ENCODE measurements at regions of chr14 and their contacts with region 1.

Region 1: GRCh38 chr14:54566410-54567223 is at the start of gene SAMD4A:
- DNase-seq: peak; percentile 89
- ATAC-seq: peak; percentile 55
- total RNA-seq, gene SAMD4A: 149 TPM

Region 2: DNA sequence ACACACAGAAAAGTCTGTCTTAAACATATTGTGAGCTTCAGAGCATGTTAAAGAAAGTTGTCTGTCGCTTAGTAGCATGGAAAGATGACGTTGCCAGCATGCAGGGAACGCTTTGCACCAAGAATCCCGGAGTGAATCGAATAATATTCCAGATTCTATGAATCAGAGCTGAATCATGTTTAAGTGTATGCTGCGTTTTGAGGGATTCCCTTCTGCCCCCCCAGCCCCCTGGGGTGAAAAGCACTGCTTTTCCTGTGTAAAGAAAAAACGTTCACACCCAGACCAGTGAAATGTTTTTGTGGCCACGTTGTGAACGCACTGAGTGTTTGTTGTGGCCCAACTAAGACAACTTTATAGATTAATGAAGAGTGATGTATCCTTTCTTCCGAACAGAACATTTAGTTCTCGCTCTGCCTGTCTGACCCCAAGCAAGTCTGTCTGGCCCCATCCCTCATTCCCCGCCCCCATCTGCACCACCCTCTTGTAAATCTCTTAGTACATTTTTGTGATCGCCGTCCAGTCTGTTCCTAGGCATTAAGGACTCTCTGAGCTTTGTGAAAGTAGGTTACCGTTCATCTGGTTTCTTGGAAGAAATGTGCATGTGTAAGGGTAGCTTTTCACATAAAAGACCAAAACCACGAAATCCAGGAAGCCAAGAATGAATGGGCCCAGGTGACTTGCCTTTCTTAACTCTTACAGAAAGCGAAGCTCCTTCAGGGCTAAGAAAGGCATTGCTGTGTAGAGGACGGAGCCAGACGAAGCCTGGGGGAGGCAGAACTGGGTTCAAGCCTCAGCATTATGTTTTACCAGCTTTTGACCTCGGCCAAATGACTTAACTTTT is 103.3 kb after region 1 on chr14:
- intact Hi-C with region 1: loop called (anchors 5 kb)
- DNase-seq: no peak
- ATAC-seq: no peak

Region 3: DNA sequence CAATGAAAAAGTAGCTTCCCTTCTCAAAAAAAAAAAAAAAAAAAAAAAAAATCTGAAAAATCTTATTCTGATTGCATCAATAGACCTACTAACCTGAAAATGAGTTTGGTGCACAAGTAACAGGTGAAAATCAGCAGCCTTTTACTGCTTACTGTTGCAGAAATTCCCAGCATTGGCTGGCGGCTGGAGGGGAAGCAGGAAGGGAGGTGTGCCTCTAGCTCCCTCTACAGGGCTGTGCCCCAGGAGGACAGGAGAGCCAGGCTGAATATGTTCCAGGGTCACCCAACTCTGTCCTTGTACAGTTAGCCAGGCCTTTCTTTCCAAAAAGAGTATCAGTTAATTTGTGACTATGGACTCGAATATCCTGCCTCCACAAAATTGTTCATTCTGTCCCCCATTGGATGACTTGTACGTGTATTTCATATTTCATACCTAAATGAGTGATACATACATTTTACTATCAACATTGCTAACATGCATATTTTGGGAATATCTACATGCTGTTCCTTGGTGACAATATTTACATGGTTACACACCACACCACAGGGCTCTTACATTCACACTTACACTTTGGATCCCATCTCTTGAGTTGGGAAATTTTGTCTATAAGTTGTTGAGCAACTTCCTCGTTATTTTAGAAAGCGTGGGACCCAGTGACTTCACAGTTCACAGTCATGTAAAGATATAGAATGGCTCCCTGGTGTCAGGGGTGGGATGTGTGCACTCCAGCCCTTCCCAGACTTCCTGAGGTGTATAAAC is 125.1 kb after region 1 on chr14:
- intact Hi-C with region 1: loop called (anchors 5 kb)
- DNase-seq: peak; percentile 83
- ATAC-seq: peak; percentile 84

Region 4: DNA sequence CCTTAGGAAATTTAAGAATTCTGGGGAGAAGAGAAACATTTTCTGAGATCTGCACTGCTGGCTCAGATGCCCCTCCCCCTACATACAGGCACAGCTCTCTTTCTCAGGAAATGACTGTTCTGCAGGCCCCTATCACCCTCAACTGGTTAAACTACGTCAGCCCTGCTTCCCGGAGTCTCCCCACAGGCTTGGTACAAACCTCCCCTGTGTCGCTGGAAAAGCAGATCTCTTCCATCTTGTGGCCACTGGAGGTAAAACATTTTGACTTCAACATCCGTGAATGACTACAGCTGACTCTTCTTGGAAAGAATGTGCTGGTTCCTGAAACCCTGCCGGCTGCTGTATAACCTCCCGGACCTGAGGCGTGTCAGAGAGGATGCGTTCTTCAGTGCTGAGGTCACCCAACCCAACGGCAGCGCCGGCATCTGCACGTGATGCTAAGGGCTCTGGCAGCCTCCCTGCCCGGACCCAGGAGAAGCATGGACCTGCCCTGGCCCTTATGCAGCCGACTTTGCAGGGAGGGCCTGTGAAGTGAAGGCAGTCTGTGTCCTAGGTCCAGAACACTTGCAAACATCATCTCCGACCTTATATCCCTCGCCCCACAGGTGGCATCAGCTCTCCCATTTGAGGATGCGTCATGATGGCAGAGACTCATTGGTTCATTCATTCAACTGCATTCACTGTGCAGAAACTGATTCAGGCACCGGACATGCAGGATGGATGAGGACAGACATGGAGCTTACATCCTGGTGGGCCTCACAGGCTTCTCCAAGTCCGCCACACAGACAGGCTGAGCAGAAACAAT is 206.8 kb after region 1 on chr14:
- intact Hi-C with region 1: loop called (anchors 1 kb)
- DNase-seq: peak; percentile 83
- ATAC-seq: peak; percentile 75

Region 5: DNA sequence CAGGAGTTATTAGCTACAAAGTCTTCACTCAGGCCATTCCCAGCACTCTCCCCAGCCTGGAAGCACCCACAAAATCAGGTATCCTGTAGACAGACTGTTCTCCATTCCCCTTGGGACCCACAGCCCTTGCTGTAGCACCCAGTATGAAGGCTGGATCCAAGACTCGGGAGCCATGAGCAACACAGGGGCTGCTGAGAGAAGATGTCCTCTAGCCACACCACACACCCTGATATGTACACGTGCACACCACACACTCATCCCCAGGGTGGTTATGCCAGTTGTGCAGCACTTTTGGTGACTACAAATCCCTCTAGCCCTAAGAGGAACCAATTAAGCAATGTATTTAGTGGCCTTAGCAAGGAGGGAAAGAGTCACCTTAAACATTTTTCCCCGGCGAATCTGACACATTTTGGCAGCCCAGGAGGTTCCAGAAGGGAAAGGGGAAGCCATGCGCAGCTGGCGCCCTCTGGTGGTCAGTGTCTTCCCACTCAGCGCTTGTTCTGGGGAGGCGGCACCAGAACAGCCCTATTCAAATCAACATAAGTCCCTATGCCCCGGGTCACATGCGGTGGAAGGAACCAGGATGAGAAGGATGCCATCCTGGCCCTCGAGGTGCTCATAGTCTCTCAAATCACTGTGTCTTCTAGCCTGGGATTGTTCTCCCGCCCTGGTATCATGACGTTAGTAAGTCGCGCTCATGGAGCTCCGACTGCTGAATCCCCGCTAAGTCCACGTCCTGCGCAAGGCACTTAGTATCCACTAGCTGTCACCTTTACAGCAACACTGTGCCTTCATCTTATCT is 239.1 kb after region 1 on chr14:
- intact Hi-C with region 1: loop called (anchors 2 kb)
- DNase-seq: peak; percentile 90
- ATAC-seq: peak; percentile 97

Region 6: DNA sequence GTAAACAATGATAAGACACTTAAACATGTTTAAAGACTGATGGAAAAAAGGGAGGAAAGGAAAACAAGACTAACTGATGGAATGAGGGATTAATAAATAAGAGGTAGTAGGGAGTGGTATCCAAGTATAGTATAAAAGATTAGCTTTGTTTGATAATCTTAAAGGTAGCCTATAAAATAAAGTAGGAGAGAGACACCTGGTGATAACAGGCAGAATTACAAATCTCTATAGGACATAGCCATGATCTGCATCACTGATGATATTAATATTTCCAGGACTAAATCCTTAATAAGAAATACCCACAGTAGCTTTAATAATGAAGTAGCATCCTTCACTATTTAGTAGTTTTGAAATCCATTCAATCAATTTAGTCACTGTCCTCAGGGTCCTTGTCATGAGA is 594.4 kb after region 1 on chr14:
- intact Hi-C with region 1: no loop called
- DNase-seq: no peak
- ATAC-seq: peak; percentile 77

Measured in Right ventricle myocardium superior (tissue), 1 donor.